Mammary epithelial cell (primary cell): ENCODE measurements at regions of chr18 and their contacts with region 1.

Region 1: DNA sequence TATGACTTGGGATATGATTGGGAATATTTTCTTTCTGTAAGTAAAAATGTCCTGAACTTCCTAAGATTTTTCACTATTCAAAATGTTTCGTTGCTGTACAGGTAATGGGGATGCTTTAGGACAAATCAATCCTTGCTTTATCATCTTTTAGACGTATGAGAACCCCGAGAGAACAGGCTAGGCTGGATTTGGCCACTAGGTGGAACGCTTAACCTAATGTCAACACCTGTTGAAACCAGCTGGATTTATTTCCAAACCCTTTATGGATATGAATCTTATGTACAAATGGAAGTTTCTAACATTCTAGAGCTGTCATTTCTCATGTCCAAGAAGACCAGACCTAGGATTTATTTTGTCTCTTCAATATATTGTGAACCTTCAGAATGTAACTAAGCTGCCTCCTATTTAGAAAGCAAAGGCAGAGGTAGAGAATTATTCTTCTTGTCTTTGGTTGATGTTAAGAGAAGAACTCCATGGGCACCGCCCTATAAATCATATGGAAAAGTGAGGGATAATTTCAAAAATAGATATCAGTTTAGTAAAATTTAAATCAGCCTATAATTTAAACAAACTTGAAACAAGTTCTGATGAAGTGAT is 96.7 kb downstream of the PMAIP1 start:
- DNase-seq: peak; percentile 47
- H3K4me3 ChIP-seq: no peak overlapping the region
- H3K27ac ChIP-seq: no peak overlapping the region
- H3K4me1 ChIP-seq: peaks cover 3% of the 10 kb centered on the region
- H3K27me3 ChIP-seq: peaks cover 6% of the 10 kb centered on the region
- CTCF ChIP-seq: peak; percentile 87 to 90

Region 2: DNA sequence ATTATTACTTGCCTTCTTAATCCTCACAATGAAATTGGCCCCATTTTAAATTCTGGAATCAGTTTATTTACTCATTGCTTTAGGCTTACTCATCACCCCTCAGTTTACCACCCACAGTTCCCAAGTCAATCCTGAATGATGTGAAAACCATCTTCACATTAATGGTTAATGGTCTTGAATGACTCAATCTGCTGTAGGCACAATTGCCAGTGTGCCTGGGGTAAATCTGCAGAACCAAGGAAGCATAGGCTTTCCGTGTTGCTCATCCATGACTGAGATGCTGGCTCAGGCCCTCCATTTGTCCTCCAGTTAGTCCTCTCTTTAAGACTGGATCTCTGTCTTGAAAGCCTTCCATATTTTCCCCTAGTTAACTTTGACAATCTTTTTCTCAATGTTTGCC is 67.8 kb after region 1 on chr18:
- CTCF ChIA-PET with region 1: no interaction called
- dilution Hi-C with region 1: no loop called
- in situ Hi-C with region 1: no loop called
- intact Hi-C with region 1: loop called (anchors 5 kb)
- DNase-seq: peak; percentile 62
- H3K4me3 ChIP-seq: no peak overlapping the region
- H3K27ac ChIP-seq: no peak overlapping the region
- H3K4me1 ChIP-seq: peaks cover 24% of the 10 kb centered on the region
- H3K27me3 ChIP-seq: peaks cover 3% of the 10 kb centered on the region
- CTCF ChIP-seq: no peak

Region 3: DNA sequence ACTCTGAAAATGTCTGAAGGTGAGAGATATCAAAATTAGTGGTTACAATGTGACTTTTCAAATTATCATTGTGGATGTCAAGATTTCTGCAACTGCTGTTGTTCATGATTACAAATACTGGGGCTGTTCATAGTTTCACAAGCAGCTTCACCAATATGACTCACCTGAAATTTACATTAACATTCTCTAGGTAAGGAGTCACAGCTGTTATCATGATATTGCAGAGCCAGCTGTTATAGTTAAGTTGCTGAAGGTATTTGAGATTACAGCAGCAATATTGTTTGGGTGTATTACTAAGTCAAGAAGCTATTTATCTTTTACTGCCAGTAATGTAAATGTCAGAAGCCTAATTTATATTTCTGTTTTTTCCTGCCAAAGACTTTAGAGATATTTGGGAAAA is 236.1 kb after region 1 on chr18:
- CTCF ChIA-PET with region 1: no interaction called
- dilution Hi-C with region 1: no loop called
- in situ Hi-C with region 1: no loop called
- intact Hi-C with region 1: loop called (anchors 10 kb)
- DNase-seq: peak; percentile 86
- H3K4me3 ChIP-seq: no peak overlapping the region
- H3K27ac ChIP-seq: no peak overlapping the region
- H3K4me1 ChIP-seq: no peaks in the 10 kb centered on the region
- H3K27me3 ChIP-seq: no peaks in the 10 kb centered on the region
- CTCF ChIP-seq: no peak

Region 4: GRCh38 chr18:60389314-60389713 is 392.8 kb after region 1 on chr18:
- CTCF ChIA-PET with region 1: no interaction called
- dilution Hi-C with region 1: no loop called
- in situ Hi-C with region 1: no loop called
- intact Hi-C with region 1: no loop called
- DNase-seq: no peak
- H3K4me3 ChIP-seq: no peak overlapping the region
- H3K27ac ChIP-seq: no peak overlapping the region
- H3K4me1 ChIP-seq: no peaks in the 10 kb centered on the region
- H3K27me3 ChIP-seq: peaks cover 1% of the 10 kb centered on the region
- CTCF ChIP-seq: no peak

Region 5: DNA sequence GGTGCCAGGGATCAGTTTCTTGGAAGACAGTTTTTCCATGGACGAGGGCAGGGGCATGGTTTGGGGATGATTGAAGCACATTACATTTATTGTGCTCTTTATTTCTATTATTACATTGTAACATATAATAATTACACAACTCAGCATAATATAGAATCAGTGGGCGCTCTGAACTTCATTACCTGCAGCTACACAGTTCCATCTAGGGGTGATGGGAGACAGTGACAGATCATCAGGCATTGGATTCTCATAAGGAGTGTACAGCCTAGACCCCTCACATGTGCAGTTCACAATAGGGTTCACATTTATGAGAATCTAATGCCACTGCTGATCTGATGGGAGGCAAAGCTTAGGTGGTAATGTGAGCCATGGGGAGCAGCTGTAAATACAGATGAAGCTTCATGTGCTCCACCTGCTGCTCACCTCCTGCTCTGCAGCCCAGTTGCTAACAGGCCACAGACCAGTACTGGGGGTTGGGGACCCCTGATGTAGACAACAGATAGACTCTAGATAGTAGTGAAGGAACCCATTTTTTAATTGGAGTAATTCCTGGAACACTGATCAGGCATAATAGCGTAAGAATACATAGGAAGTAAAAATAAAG is 417.6 kb after region 1 on chr18:
- CTCF ChIA-PET with region 1: interaction called, 3 read pairs
- dilution Hi-C with region 1: no loop called
- in situ Hi-C with region 1: loop called (anchors 10 kb)
- intact Hi-C with region 1: loop called (anchors 1 kb)
- DNase-seq: peak; percentile 1
- H3K4me3 ChIP-seq: no peak overlapping the region
- H3K27ac ChIP-seq: no peak overlapping the region
- H3K4me1 ChIP-seq: no peaks in the 10 kb centered on the region
- H3K27me3 ChIP-seq: peaks cover 3% of the 10 kb centered on the region
- CTCF ChIP-seq: peak; percentile 29 to 75